Activated naive CD4-positive, alpha-beta T cell treated with anti-CD3 and anti-CD28 coated beads, Interleukin-2, amount 10 ng/mL, durations not matched to agents 7 days and 5 days (primary cell): ENCODE measurements at regions of chr16 and their contacts with region 1.

Region 1: DNA sequence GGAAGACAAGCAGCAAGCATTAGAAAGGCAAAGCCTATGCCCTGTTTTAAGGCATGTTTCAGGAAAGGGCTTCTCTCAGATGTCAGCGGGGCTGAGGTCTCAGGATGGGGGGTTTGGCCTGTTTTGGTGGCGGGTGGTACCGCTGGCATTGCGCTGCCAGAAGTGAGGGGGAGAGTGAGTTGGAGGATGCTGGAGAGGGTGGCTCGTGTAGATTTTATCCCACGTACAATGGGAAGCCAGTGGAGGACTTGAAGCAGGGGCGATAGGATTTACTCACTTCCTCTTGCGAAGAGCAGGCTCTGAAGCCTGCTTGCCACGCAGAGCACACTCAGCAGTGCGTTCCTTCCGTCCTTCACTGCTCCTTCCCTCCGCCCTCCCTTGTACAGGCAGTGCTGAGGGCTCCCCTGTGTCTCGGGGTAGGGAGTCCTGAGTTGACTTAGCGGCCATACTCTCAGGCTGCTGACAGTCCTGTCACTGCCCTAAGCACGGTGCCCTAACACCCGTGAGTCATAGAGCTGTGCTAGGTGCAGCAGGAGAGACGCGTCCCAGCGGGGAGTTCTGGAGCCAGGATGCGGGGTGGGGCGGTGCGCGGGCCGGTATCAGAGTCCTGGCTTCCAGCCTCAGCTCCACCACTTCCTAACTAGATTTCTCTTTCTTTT is 113.1 kb downstream of the SNX29 start:
- DNase-seq: peak; percentile 62
- H3K4me3 Mint-ChIP-seq: peak overlapping the region; percentile 56
- H3K27ac Mint-ChIP-seq: peak overlapping the region; percentile 89
- H3K4me1 Mint-ChIP-seq: peaks cover 31% of the 10 kb centered on the region
- H3K27me3 Mint-ChIP-seq: no peaks in the 10 kb centered on the region

Region 2: GRCh38 chr16:11880007-11880406 is 209.6 kb before region 1 on chr16:
- CTCF ChIA-PET with region 1: no interaction called
- DNase-seq: no peak
- H3K4me3 Mint-ChIP-seq: no peak overlapping the region
- H3K27ac Mint-ChIP-seq: peak overlapping the region; percentile 47
- H3K4me1 Mint-ChIP-seq: peaks cover 3% of the 10 kb centered on the region
- H3K27me3 Mint-ChIP-seq: no peaks in the 10 kb centered on the region

Region 3: GRCh38 chr16:12079412-12079965 is 10.1 kb before region 1 on chr16:
- CTCF ChIA-PET with region 1: interaction called, 20 read pairs
- DNase-seq: peak; percentile 41
- H3K4me3 Mint-ChIP-seq: peak overlapping the region; percentile 58
- H3K27ac Mint-ChIP-seq: peak overlapping the region; percentile 96
- H3K4me1 Mint-ChIP-seq: peaks cover 88% of the 10 kb centered on the region
- H3K27me3 Mint-ChIP-seq: no peaks in the 10 kb centered on the region